ENCODE measurements at regions of chr13 and their contacts with region 1.

Region 1: DNA sequence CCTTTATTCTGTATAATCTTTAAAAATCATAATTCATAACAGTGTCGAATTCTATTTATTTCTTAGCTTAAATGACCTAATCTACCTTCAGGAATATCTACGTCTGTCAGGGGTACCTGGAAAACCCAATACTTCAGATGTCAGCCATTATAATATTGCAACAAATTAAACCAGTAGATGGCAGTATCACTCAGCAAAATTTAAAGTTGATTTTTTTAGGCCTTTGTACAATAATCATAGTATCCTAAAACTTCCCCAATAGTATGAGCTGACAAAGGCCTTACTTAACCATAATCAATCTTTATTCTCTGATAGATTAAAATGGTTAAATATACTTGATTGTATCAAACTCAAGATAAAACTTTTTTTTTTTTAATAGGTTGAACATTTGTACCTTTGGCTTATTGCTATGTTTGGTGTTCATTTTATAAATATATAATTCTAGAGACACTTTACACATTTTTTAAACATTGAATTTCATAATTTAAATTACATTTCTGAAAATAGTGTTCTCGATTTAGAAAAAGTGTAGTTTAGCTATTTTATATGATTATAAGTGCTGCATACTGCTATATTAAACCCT is 830.2 kb upstream of the SPRY2 start:
- DNase-seq: peak; percentile 2 to 9 (median 4)
- ATAC-seq: no peak
- H3K4me3 ChIP-seq: no peak overlapping the region
- H3K27ac ChIP-seq: no peak overlapping the region
- H3K4me1 ChIP-seq: no peaks in the 10 kb centered on the region
- H3K27me3 ChIP-seq: no peaks in the 10 kb centered on the region
- CTCF ChIP-seq: peak in 1 of 3 experiments; percentile 40; a peak in 2 of 6 replicates
- EP300 ChIP-seq: no peak
- POLR2A ChIP-seq: no peak
- RAD21 ChIP-seq: peak; percentile 28 to 50; a peak in 3 of 4 replicates

Region 2: GRCh38 chr13:80428341-80429096 is 742.6 kb before region 1 on chr13:
- CTCF ChIA-PET with region 1: no interaction called
- POLR2A ChIA-PET with region 1: no interaction called
- in situ Hi-C with region 1: no loop called
- intact Hi-C with region 1: no loop called
- DNase-seq: no peak
- ATAC-seq: no peak
- H3K4me3 ChIP-seq: no peak overlapping the region
- H3K27ac ChIP-seq: no peak overlapping the region
- H3K4me1 ChIP-seq: no peaks in the 10 kb centered on the region
- H3K27me3 ChIP-seq: no peaks in the 10 kb centered on the region
- CTCF ChIP-seq: no peak
- EP300 ChIP-seq: no peak
- POLR2A ChIP-seq: no peak
- RAD21 ChIP-seq: no peak

Region 3: DNA sequence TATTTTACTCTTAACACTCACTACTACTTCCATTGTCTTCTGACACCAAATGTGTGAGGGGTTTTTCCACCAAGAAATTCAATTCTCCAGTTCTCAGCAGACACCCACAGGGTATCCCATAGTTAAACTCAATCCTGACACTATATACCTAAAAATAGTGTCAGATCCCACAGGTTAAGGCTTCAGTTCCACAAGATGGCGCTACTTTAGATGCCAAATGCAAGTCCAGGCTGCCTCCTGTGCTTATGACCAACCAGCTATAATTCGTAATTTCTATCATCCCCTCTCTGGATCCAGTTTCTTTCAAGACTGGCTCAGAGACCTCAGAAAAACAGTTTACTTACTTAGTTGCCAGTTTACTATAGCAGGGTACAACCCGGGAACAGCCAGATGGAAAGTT is 316.0 kb after region 1 on chr13:
- CTCF ChIA-PET with region 1: no interaction called
- POLR2A ChIA-PET with region 1: no interaction called
- in situ Hi-C with region 1: no loop called
- intact Hi-C with region 1: loop called (anchors 10 kb)
- DNase-seq: peak in 1 of 4 experiments; percentile 14
- ATAC-seq: peak; percentile 47; the same call in 1 of the 3 replicates
- H3K4me3 ChIP-seq: no peak overlapping the region
- H3K27ac ChIP-seq: no peak overlapping the region
- H3K4me1 ChIP-seq: no peaks in the 10 kb centered on the region
- H3K27me3 ChIP-seq: no peaks in the 10 kb centered on the region
- CTCF ChIP-seq: no peak; a peak in 1 of 6 replicates
- EP300 ChIP-seq: no peak
- POLR2A ChIP-seq: no peak
- RAD21 ChIP-seq: no peak

Region 4: GRCh38 chr13:82330499-82330898 is 1159.3 kb after region 1 on chr13:
- CTCF ChIA-PET with region 1: no interaction called
- POLR2A ChIA-PET with region 1: no interaction called
- in situ Hi-C with region 1: no loop called
- intact Hi-C with region 1: loop called (anchors 5 kb)
- DNase-seq: peak; percentile 2 to 16 (median 11)
- ATAC-seq: no peak
- H3K4me3 ChIP-seq: no peak overlapping the region
- H3K27ac ChIP-seq: no peak overlapping the region
- H3K4me1 ChIP-seq: no peaks in the 10 kb centered on the region
- H3K27me3 ChIP-seq: no peaks in the 10 kb centered on the region
- CTCF ChIP-seq: peak in 2 of 3 experiments; percentile 31 to 34; a peak in 2 of 6 replicates
- EP300 ChIP-seq: no peak
- POLR2A ChIP-seq: no peak
- RAD21 ChIP-seq: peak in 1 of 2 experiments; percentile 30; a peak in 2 of 4 replicates

Region 5: GRCh38 chr13:83007226-83007625 is 1836.1 kb after region 1 on chr13:
- CTCF ChIA-PET with region 1: no interaction called
- POLR2A ChIA-PET with region 1: no interaction called
- in situ Hi-C with region 1: no loop called
- intact Hi-C with region 1: no loop called
- DNase-seq: no peak
- ATAC-seq: no peak
- H3K4me3 ChIP-seq: no peak overlapping the region
- H3K27ac ChIP-seq: no peak overlapping the region
- H3K4me1 ChIP-seq: no peaks in the 10 kb centered on the region
- H3K27me3 ChIP-seq: no peaks in the 10 kb centered on the region
- CTCF ChIP-seq: no peak
- EP300 ChIP-seq: no peak
- POLR2A ChIP-seq: no peak
- RAD21 ChIP-seq: no peak

Measured in K562 (cell line).